Heart left ventricle (tissue), 16 donors: ENCODE measurements at regions of chr16 and their contacts with region 1.

Region 1: DNA sequence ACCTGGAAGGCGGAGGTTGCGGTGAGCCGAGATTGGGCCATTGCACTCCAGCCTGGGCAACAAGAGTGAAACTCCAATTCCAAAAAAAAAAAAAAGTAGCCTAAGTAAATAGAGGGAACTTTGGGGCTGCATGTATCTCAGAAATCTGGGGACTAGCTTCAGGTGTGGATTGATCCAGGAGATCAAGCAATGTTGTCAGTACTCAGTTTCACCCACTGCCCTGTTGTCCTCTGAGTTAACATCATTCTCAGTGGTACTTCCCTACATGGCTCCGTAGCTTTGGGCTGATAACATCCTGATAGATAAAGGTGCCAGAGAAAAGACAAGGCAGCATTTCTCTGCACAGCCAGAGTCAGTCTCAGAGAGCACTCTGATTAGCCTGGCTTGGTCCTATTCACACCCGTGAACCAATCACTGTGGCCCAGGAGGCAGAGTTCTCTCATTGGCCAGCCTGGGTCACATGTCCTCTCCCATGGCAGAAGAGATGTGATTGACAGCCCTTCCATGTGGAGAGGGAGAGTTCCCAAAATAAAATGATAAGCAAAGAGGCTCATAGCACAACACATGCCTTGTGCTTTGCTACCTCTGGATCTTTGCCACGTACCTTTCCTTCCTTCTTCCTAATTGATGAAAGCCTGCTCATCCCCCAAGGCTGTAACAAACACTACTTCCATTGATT is 99.6 kb downstream of the ABCC1 start:
- DNase-seq: peak; percentile 54 to 73 (median 62)
- ATAC-seq: peak; percentile 93 to 95 (median 94)
- H3K4me3 ChIP-seq: no peak overlapping the region
- H3K27ac ChIP-seq: peak overlapping the region in 9 of 12 donors; percentile 1 to 62 (median 38)
- H3K4me1 ChIP-seq: peaks cover 0 to 17% (median 4%) of the 10 kb centered on the region in 12 donors
- H3K27me3 ChIP-seq: no peaks in the 10 kb centered on the region
- CTCF ChIP-seq: no peak
- POLR2A ChIP-seq: no peak

Region 2: DNA sequence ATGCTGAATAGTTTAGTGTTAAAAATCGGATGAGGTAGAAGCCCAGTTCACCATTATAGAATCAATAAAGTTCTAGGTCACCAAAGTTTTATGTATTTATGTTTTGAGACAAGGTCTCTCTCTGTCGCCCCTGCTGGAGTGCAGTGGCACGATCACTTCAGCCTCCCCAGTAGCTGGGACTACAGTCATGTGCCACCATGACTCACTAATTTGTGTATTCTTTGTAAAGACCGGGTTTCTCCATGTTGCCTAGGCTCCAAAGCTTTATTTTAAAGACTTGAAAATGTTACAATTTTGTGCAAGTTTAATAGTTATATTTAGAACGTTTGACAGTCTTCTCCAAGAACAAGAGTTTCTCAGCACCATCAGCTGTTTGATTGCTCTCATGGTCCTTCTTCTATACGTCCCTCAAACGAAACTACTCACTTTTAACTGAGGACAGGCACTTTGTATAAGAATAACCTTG is 366.9 kb before region 1 on chr16:
- intact Hi-C with region 1: no loop called
- DNase-seq: no peak
- ATAC-seq: peak in 2 of 4 donors; percentile 44 to 50
- H3K4me3 ChIP-seq: no peak overlapping the region
- H3K27ac ChIP-seq: peak overlapping the region in 1 of 12 donors; percentile 25
- H3K4me1 ChIP-seq: no peaks in the 10 kb centered on the region
- H3K27me3 ChIP-seq: no peaks in the 10 kb centered on the region
- CTCF ChIP-seq: peak in 6 of 12 donors; percentile 12 to 38 (median 29)
- POLR2A ChIP-seq: no peak

Region 3: DNA sequence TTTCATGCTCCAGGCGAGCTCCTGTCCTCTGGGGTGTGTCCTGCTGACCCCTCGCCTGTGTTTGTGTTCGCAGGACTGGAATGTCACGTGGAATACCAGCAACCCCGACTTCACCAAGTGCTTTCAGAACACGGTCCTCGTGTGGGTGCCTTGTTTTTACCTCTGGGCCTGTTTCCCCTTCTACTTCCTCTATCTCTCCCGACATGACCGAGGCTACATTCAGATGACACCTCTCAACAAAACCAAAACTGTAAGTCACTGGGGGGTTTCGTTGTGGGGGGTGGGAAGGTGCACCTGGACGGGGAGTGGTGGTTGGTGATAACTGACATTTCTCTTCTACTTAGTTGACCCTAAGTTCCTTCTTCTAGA is 41.3 kb before region 1 on chr16:
- intact Hi-C with region 1: no loop called
- DNase-seq: no peak
- ATAC-seq: no peak
- H3K4me3 ChIP-seq: no peak overlapping the region
- H3K27ac ChIP-seq: no peak overlapping the region
- H3K4me1 ChIP-seq: peaks cover 0 to 9% (median 0%) of the 10 kb centered on the region in 12 donors
- H3K27me3 ChIP-seq: no peaks in the 10 kb centered on the region
- CTCF ChIP-seq: no peak
- POLR2A ChIP-seq: no peak

Region 4: GRCh38 chr16:16021988-16022682 is 26.9 kb before region 1 on chr16:
- intact Hi-C with region 1: loop called in 1 of 10 experiments (anchors 2 kb)
- DNase-seq: peak; percentile 94 to 98 (median 95)
- ATAC-seq: peak; percentile 97 to 99 (median 98)
- H3K4me3 ChIP-seq: peak overlapping the region in 1 of 12 donors; percentile 14
- H3K27ac ChIP-seq: peak overlapping the region; percentile 62 to 88 (median 81)
- H3K4me1 ChIP-seq: peaks cover 8 to 38% (median 22%) of the 10 kb centered on the region in 12 donors
- H3K27me3 ChIP-seq: no peaks in the 10 kb centered on the region
- CTCF ChIP-seq: no peak
- POLR2A ChIP-seq: no peak

Region 5: DNA sequence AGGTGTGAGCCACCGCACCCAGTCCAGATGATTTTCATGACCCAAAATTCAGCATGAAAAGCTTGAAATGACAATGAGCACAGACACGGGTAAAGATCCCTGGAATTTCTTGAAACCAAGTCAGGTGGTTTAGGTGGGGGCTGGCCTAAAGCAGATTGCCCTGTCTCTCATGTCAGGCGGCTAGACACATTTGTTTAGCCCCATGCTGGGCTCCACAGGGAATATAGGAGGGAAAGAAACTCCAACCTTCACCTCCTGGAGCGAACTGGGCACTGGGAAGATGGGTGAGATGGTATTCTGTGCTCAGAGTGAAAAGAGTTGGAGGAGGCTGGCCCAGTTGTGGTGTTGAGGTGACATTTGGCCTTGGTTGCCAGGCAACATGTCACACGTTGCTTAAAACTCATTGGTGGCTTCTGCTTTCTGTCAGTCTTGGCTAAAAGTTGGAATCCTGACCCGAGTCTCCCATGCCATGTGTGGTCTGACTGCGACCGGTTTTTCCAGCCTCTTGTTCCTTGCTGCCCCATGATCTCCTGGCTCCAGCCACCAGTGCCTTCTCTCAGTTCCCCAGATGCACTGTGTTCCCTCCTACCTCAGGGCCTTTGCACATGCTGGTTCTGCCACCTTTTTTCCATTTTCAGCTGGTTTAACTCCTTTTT is 60.5 kb after region 1 on chr16:
- intact Hi-C with region 1: loop called in 1 of 10 experiments (anchors 10 kb)
- DNase-seq: no peak
- ATAC-seq: no peak
- H3K4me3 ChIP-seq: no peak overlapping the region
- H3K27ac ChIP-seq: peak overlapping the region in 1 of 12 donors; percentile 60
- H3K4me1 ChIP-seq: no peaks in the 10 kb centered on the region
- H3K27me3 ChIP-seq: no peaks in the 10 kb centered on the region
- CTCF ChIP-seq: no peak
- POLR2A ChIP-seq: no peak